ENCODE measurements at regions of chr13 and their contacts with region 1.

Region 1: DNA sequence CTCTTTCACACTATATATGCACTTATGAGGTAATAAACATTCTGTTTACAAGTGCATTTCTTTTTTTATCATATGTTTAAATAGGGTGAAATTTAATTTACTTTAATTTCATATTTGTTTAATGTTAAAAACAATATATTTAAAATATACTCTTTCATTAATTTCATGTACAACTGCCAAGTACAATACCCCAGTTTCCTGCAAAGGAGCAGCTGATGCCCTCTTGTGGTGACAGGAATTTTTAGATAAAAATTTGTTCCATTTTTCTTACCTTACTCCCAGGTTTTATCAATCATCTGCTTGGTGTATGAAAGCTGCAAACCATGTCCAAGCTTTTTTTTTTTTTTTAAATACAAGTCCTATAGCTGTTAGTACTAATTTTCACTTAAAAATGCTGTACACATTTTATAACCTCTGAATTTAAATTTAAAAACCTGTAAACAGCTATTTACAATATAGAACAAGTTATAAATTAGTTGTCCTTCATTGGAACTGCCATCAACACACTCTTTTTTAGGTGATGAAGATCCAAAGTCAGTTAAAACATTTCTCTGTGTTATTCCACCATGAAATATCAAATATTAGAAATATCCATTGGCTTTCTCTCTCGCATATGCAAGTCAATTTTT is 4.9 kb downstream of the PCDH20 start:
- DNase-seq: peak; percentile 10 to 43
- H3K4me3 ChIP-seq: no peak overlapping the region
- H3K4me1 ChIP-seq: no peaks in the 10 kb centered on the region; the same call in 1 of the 2 replicates
- H3K27me3 ChIP-seq: no peaks in the 10 kb centered on the region

Region 2: DNA sequence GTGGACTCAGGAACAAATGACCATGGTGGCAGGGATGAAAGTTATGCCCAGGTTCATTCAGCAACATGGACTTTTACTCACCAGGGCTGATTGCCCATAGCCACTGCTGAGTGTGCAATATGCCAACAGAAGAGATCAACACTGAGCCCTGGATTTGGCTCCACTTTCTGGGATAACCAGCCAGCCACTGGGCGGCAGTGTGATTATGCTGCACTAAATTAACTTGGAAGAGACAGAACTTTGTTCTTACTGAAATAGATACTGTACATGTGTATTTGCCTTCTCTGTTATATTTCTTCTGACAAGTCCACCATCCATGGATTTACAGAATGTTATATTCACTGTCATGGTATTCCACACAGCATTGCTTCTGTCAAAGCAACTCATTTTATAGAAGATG is 756.4 kb before region 1 on chr13:
- in situ Hi-C with region 1: loop called (anchors 25 kb)
- DNase-seq: peak; percentile 45 to 67
- H3K4me3 ChIP-seq: no peak overlapping the region
- H3K4me1 ChIP-seq: no peaks in the 10 kb centered on the region
- H3K27me3 ChIP-seq: no peaks in the 10 kb centered on the region